ENCODE measurements at regions of chr1 and their contacts with region 1.

Region 1: GRCh38 chr1:211908453-211908852 is 77.9 kb upstream of the LPGAT1 start:
- DNase-seq: no peak
- ATAC-seq: no peak
- H3K4me3 ChIP-seq: no peak overlapping the region
- H3K4me3 Mint-ChIP-seq: no peak overlapping the region
- H3K27ac ChIP-seq: no peak overlapping the region
- H3K27ac Mint-ChIP-seq: no peak overlapping the region
- H3K4me1 ChIP-seq: no peaks in the 10 kb centered on the region
- H3K4me1 Mint-ChIP-seq: no peaks in the 10 kb centered on the region
- H3K27me3 ChIP-seq: peaks cover 0 to 9% of the 10 kb centered on the region in 2 experiments
- H3K27me3 Mint-ChIP-seq: peaks cover 9% of the 10 kb centered on the region in 2 donors

Region 2: GRCh38 chr1:210347112-210347511 is 1561.3 kb before region 1 on chr1:
- CTCF ChIA-PET with region 1: no interaction called
- POLR2A ChIA-PET with region 1: interaction called in 1 of 2 experiments, 11 read pairs
- DNase-seq: peak in 1 of 35 experiments; percentile 24
- ATAC-seq: no peak
- H3K4me3 ChIP-seq: no peak overlapping the region
- H3K4me3 Mint-ChIP-seq: no peak overlapping the region
- H3K27ac ChIP-seq: no peak overlapping the region
- H3K27ac Mint-ChIP-seq: no peak overlapping the region
- H3K4me1 ChIP-seq: peaks cover 0 to 13% of the 10 kb centered on the region in 2 experiments
- H3K4me1 Mint-ChIP-seq: peaks cover 3 to 8% (median 5%) of the 10 kb centered on the region in 3 donors
- H3K27me3 ChIP-seq: no peaks in the 10 kb centered on the region
- H3K27me3 Mint-ChIP-seq: no peaks in the 10 kb centered on the region

Region 3: GRCh38 chr1:211578640-211579433 is 329.6 kb before region 1 on chr1 and contains the start of gene SLC30A1:
- CTCF ChIA-PET with region 1: no interaction called
- POLR2A ChIA-PET with region 1: no interaction called
- DNase-seq: peak; percentile 97 to 100 (median 99)
- ATAC-seq: peak; percentile 88 to 93 (median 90)
- H3K4me3 ChIP-seq: peak within 1 kb of the TSS; percentile 91 to 92
- H3K4me3 Mint-ChIP-seq: peak within 1 kb of the TSS; percentile 89 to 94 (median 90)
- H3K27ac ChIP-seq: peak within 1 kb of the TSS; percentile 51
- H3K27ac Mint-ChIP-seq: peak within 1 kb of the TSS; percentile 84 to 87
- H3K4me1 ChIP-seq: peaks cover 14 to 19% of the 10 kb centered on the region in 2 experiments
- H3K4me1 Mint-ChIP-seq: peaks cover 32 to 43% (median 38%) of the 10 kb centered on the region in 3 donors
- H3K27me3 ChIP-seq: no peaks in the 10 kb centered on the region
- H3K27me3 Mint-ChIP-seq: no peaks in the 10 kb centered on the region
- total RNA-seq, gene SLC30A1: 4.7 to 11.8 (median 9.4) TPM

Measured in T-cell (primary cell).